Mammary epithelial cell (primary cell): ENCODE measurements at regions of chr7 and their contacts with region 1.

Region 1: GRCh38 chr7:22001345-22002004 is 55.8 kb upstream of the CDCA7L start:
- DNase-seq: peak; percentile 71
- H3K4me3 ChIP-seq: peak overlapping the region in 1 of 3 experiments; percentile 22
- H3K27ac ChIP-seq: peak overlapping the region; percentile 57
- H3K4me1 ChIP-seq: peaks cover 14% of the 10 kb centered on the region
- H3K27me3 ChIP-seq: no peaks in the 10 kb centered on the region
- CTCF ChIP-seq: peak; percentile 54 to 70

Region 2: DNA sequence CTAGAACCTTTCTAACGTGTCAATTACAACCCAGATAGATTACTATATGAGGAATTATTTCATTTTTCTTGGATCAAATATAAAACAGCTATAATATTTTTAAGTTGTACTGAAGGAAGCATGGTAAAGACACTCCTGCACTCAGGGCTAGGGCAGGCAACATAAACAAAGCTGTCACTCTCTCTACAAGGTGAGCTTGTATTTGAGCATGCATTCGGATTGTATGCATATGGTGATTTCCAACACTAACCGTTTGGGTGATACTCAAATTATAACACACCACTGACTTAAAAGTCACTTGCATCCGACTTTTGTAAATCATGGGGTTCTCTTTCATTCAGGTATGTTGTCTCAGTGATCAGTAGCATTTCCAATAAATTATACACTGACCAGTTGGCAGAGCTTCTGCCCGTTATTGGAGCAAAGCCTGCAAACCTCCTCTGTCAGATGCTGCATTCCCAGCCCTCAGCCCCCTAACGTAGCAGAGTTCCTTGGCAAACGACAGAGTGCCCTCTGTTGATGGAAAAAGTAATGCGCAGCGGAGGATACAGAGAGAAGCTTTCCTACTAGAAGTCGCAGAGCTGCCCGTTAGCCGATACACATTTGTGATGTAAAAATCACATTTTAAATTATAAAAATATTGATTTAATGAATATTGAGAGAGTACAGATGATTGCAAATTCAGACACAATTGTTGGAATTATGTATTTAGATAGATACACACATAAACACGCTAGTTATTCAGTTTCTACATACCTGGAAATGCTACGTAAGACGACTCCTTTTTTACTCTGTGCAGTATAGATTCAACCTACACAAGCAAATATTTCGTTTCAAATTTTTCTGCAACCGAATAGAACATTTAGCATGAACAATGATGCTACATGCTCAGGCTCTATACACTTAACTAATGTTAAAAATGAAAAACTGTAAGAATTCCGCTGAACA is 747.5 kb before region 1 on chr7:
- CTCF ChIA-PET with region 1: no interaction called
- dilution Hi-C with region 1: no loop called
- in situ Hi-C with region 1: loop called in 1 of 2 experiments (anchors 25 kb)
- intact Hi-C with region 1: loop called (anchors 1 kb)
- DNase-seq: peak; percentile 52
- H3K4me3 ChIP-seq: no peak overlapping the region
- H3K27ac ChIP-seq: no peak overlapping the region
- H3K4me1 ChIP-seq: peaks cover 3% of the 10 kb centered on the region
- H3K27me3 ChIP-seq: no peaks in the 10 kb centered on the region
- CTCF ChIP-seq: peak; percentile 83 to 86

Region 3: DNA sequence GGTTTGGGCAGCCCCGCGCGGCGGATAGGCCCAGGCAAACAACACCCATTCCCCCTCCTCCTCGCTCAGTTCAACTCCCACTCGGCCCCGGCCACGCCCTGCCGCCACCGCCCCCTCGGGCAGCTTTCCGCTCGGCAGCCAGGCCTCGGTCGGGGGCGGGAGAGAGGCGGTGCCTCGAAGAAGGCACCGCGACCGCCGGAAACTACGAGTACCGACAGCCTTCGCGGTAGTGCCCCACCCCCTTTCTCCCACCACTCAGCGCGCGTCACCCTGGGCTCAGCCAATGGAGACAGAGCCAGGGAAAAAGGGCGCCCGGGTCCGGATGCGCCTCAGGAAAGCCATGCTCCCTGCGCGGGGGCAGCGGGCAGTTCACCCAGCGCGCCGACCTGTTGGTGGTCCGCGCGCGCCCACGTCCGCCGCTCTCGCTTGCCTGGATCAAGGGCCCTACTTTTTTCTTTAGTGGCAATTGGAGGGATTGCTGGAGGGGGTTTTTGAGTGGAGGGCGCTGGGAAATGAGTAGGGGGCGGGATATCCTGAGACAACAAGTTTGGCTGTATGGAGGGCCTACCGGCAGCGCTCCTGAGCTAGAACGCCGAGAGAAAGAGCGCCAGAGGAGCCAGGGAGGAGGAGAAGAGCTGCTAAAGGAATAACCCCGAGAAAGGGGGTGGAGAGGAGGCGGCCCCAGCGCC is 574.1 kb before region 1 on chr7:
- CTCF ChIA-PET with region 1: no interaction called
- dilution Hi-C with region 1: no loop called
- in situ Hi-C with region 1: no loop called
- intact Hi-C with region 1: loop called (anchors 10 kb)
- DNase-seq: peak; percentile 99
- H3K4me3 ChIP-seq: peak overlapping the region; percentile 67 to 99 (median 69)
- H3K27ac ChIP-seq: peak overlapping the region; percentile 96
- H3K4me1 ChIP-seq: peaks cover 9% of the 10 kb centered on the region
- H3K27me3 ChIP-seq: no peaks in the 10 kb centered on the region
- CTCF ChIP-seq: no peak

Region 4: GRCh38 chr7:21523779-21524178 is 477.7 kb before region 1 on chr7:
- CTCF ChIA-PET with region 1: no interaction called
- dilution Hi-C with region 1: no loop called
- in situ Hi-C with region 1: no loop called
- intact Hi-C with region 1: loop called (anchors 5 kb)
- DNase-seq: no peak
- H3K4me3 ChIP-seq: no peak overlapping the region
- H3K27ac ChIP-seq: no peak overlapping the region
- H3K4me1 ChIP-seq: no peaks in the 10 kb centered on the region
- H3K27me3 ChIP-seq: no peaks in the 10 kb centered on the region
- CTCF ChIP-seq: no peak

Region 5: DNA sequence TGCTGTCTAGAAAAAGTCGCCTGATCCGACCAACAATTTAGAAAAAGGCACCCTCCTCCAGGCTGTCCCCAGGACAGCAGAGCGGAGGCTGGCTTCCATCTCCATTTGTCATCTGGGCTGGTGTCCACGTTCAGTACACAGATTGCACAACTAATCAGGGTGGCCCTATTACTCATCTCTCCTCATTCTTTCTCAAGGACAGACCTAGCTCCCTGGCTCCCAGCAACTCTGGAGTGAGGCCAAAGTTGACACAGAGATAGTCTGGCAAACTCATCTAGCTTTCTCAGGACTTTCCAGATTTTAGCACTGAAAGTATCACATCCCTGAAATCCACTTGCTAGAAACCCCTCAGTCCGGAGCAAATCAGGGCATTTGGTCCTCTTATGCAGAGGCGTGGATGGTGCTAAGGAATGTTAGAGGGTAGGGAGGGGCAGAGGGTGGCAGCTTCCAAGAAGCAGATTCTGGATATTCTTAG is 383.5 kb before region 1 on chr7:
- CTCF ChIA-PET with region 1: no interaction called
- dilution Hi-C with region 1: no loop called
- in situ Hi-C with region 1: no loop called
- intact Hi-C with region 1: loop called (anchors 5 kb)
- DNase-seq: peak; percentile 78
- H3K4me3 ChIP-seq: no peak overlapping the region
- H3K27ac ChIP-seq: no peak overlapping the region
- H3K4me1 ChIP-seq: peaks cover 23% of the 10 kb centered on the region
- H3K27me3 ChIP-seq: no peaks in the 10 kb centered on the region
- CTCF ChIP-seq: no peak

Region 6: DNA sequence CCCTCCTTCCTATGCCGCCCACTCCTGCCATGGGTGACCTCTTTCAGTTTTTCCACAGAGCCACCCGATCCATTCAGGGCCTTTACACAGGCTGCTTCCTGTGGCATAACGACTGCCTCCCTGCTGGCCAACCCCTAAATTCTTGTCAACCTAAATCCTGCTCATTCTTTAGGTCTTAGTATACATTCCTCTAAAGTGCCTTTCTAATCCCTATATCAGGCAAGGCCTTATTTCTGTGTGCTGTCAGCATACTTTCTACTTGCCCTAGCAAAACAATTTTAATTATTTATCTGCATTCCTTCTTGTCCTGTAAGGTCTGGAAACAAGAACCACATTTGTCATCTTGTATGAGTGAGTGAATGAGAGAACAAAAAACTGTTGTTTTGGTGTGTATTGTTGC is 326.2 kb before region 1 on chr7:
- CTCF ChIA-PET with region 1: no interaction called
- dilution Hi-C with region 1: no loop called
- in situ Hi-C with region 1: no loop called
- intact Hi-C with region 1: no loop called
- DNase-seq: no peak
- H3K4me3 ChIP-seq: no peak overlapping the region
- H3K27ac ChIP-seq: no peak overlapping the region
- H3K4me1 ChIP-seq: no peaks in the 10 kb centered on the region
- H3K27me3 ChIP-seq: no peaks in the 10 kb centered on the region
- CTCF ChIP-seq: no peak

Region 7: DNA sequence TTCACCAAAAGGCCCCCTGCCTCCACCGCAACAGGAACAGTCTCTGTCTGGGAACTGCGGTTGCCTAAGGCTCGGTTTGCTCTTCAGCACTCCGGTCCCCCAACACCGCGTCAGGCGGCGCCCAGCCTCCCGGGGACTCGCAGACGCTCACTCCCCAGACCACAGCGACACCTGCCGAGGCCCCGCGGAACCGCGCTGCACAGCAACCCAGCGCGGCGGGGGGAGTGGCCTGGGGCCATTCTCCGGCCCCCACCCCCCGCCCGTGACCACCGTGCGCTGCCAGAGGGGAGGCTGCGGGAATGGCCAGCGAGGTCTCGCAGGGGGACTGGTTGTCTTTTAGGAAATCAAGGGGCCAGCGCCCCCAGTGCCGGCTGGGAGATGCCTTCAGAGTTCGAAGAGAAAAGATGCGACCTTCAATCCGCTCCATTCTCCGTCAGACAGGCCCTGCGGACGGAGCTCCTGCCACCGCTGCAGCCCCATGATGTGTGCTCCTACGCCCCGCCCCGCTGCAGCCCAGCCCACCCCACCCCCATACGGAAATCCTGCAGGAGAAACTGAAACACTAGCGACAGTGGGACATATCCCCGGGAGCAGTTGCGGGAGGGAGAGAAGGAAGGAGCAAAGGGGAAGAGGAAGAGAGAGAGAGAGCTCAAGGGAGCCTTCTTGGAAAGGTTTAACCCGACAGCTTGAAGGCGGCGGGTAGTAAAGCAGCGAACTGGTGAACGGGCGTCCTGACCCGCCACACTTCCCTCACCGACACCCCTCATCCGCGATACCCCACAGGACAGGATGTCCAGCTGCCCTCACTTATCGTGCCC is 81.6 kb after region 1 on chr7:
- CTCF ChIA-PET with region 1: no interaction called
- dilution Hi-C with region 1: no loop called
- in situ Hi-C with region 1: no loop called
- intact Hi-C with region 1: loop called (anchors 1 kb)
- DNase-seq: peak; percentile 70
- H3K4me3 ChIP-seq: peak overlapping the region; percentile 51 to 73 (median 70)
- H3K27ac ChIP-seq: no peak overlapping the region
- H3K4me1 ChIP-seq: peaks cover 6% of the 10 kb centered on the region
- H3K27me3 ChIP-seq: no peaks in the 10 kb centered on the region
- CTCF ChIP-seq: peak; percentile 67 to 97